ENCODE measurements at regions of chr6 and their contacts with region 1.

Region 1: GRCh38 chr6:20509212-20509611 is 25.0 kb upstream of the CDKAL1 start:
- DNase-seq: no peak
- ATAC-seq: no peak
- H3K4me3 ChIP-seq: no peak overlapping the region
- H3K27ac ChIP-seq: no peak overlapping the region
- H3K4me1 ChIP-seq: no peaks in the 10 kb centered on the region
- H3K27me3 ChIP-seq: no peaks in the 10 kb centered on the region
- CTCF ChIP-seq: no peak

Region 2: DNA sequence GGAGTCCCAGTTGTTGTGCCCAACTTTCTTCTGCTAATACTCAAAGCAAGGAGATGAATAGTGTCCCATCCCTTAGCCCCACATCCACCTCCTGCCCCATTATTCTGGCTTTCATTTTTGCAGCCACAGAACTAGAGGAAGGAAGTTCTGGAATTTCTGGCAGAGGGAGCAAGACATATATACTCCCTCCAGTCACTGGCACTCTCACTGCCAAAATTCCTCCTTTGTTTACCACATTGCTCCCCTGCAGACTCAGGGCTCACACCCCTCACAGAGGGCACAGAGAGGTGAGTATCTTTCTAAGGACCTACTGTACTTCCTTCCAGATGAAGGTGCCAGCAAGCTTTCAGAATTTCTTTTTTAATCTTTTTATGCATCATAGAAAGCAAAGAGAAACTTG is 840.0 kb before region 1 on chr6:
- intact Hi-C with region 1: loop called in 1 of 10 experiments (anchors 5 kb)
- DNase-seq: no peak
- ATAC-seq: no peak
- H3K4me3 ChIP-seq: no peak overlapping the region
- H3K27ac ChIP-seq: no peak overlapping the region
- H3K4me1 ChIP-seq: peaks cover 0 to 16% (median 9%) of the 10 kb centered on the region in 9 donors
- H3K27me3 ChIP-seq: no peaks in the 10 kb centered on the region
- CTCF ChIP-seq: no peak

Measured in heart right ventricle (tissue), 16 donors.